GM12878 (cell line): ENCODE measurements at regions of chr21 and their contacts with region 1.

Region 1: GRCh38 chr21:21897275-21897866 is 899.2 kb downstream of the NCAM2 start:
- DNase-seq: no peak
- ATAC-seq: no peak
- H3K4me3 ChIP-seq: no peak overlapping the region
- H3K27ac ChIP-seq: no peak overlapping the region
- H3K4me1 ChIP-seq: no peaks in the 10 kb centered on the region
- H3K27me3 ChIP-seq: no peaks in the 10 kb centered on the region
- CTCF ChIP-seq: no peak
- EP300 ChIP-seq: no peak
- POLR2A ChIP-seq: no peak
- RAD21 ChIP-seq: no peak

Region 2: GRCh38 chr21:21968810-21969209 is 71.4 kb after region 1 on chr21:
- CTCF ChIA-PET with region 1: no interaction called
- POLR2A ChIA-PET with region 1: no interaction called
- RAD21 ChIA-PET with region 1: no interaction called
- SMC1A ChIA-PET with region 1: no interaction called
- in situ Hi-C with region 1: no loop called
- intact Hi-C with region 1: no loop called
- DNase-seq: no peak
- ATAC-seq: no peak
- H3K4me3 ChIP-seq: no peak overlapping the region
- H3K27ac ChIP-seq: no peak overlapping the region
- H3K4me1 ChIP-seq: no peaks in the 10 kb centered on the region
- H3K27me3 ChIP-seq: no peaks in the 10 kb centered on the region
- CTCF ChIP-seq: no peak
- EP300 ChIP-seq: no peak
- POLR2A ChIP-seq: no peak
- RAD21 ChIP-seq: no peak

Region 3: GRCh38 chr21:23809573-23809972 is 1912.2 kb after region 1 on chr21:
- CTCF ChIA-PET with region 1: no interaction called
- POLR2A ChIA-PET with region 1: no interaction called
- RAD21 ChIA-PET with region 1: no interaction called
- SMC1A ChIA-PET with region 1: no interaction called
- in situ Hi-C with region 1: loop called (anchors 5 kb)
- intact Hi-C with region 1: no loop called
- DNase-seq: no peak
- ATAC-seq: no peak
- H3K4me3 ChIP-seq: no peak overlapping the region
- H3K27ac ChIP-seq: no peak overlapping the region
- H3K4me1 ChIP-seq: no peaks in the 10 kb centered on the region
- H3K27me3 ChIP-seq: no peaks in the 10 kb centered on the region
- CTCF ChIP-seq: no peak
- EP300 ChIP-seq: no peak
- POLR2A ChIP-seq: no peak
- RAD21 ChIP-seq: no peak